ENCODE measurements at regions of chr13 and their contacts with region 1.

Region 1: GRCh38 chr13:21458813-21459701 is at the start of gene ZDHHC20:
- DNase-seq: peak; percentile 98
- H3K4me3 Mint-ChIP-seq: peak within 1 kb of the TSS; percentile 94
- H3K27ac Mint-ChIP-seq: peak within 1 kb of the TSS; percentile 93
- H3K4me1 Mint-ChIP-seq: peaks cover 27% of the 10 kb centered on the region
- H3K27me3 Mint-ChIP-seq: no peaks in the 10 kb centered on the region
- total RNA-seq, gene ZDHHC20: 64.7 and 65.4 TPM in 2 replicates

Region 2: DNA sequence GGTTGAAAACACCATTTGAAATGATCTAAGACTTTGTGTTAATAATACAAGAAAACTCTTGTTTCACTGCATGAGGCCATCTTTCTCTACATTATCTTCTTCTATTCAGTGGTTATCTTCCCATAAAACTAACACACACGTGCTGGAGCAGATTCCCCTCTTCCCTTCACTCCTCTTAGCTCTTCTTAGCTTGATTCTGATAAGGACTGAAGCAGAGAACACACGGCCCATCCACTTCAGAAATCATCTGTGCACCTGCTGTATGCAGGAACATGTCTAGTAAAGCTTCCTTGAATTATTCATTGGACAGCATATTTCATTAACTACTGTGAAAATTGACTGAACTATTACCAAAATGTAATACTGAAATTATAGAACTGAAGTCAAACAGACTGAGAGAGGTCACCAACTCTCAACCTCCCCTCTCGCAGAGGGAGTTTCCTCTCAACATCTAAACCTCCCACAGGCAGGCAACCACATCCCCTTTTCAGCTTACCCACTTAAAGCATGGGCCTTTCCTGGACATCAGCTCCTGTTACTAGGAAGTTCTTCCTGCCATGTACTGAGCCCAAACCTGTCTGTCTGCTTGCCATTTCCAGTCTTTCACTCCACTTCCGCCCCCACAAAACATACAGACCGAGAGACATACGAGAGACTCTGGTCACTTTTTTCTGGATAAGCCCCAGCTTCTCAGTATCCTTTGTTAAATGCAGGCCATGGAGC is 1047.3 kb before region 1 on chr13:
- intact Hi-C with region 1: loop called (anchors 10 kb)
- DNase-seq: peak; percentile 85
- H3K4me3 Mint-ChIP-seq: peak overlapping the region; percentile 68
- H3K27ac Mint-ChIP-seq: peak overlapping the region; percentile 81
- H3K4me1 Mint-ChIP-seq: peaks cover 26% of the 10 kb centered on the region
- H3K27me3 Mint-ChIP-seq: no peaks in the 10 kb centered on the region

Region 3: GRCh38 chr13:20902438-20903163 is 556.5 kb before region 1 on chr13 and contains the start of gene XPO4:
- intact Hi-C with region 1: loop called (anchors 1 kb)
- DNase-seq: peak; percentile 95
- H3K4me3 Mint-ChIP-seq: peak within 1 kb of the TSS; percentile 99
- H3K27ac Mint-ChIP-seq: peak within 1 kb of the TSS; percentile 97
- H3K4me1 Mint-ChIP-seq: peaks cover 26% of the 10 kb centered on the region
- H3K27me3 Mint-ChIP-seq: peaks cover 2% of the 10 kb centered on the region
- total RNA-seq, gene XPO4: 32.5 and 34.8 TPM in 2 replicates

Region 4: DNA sequence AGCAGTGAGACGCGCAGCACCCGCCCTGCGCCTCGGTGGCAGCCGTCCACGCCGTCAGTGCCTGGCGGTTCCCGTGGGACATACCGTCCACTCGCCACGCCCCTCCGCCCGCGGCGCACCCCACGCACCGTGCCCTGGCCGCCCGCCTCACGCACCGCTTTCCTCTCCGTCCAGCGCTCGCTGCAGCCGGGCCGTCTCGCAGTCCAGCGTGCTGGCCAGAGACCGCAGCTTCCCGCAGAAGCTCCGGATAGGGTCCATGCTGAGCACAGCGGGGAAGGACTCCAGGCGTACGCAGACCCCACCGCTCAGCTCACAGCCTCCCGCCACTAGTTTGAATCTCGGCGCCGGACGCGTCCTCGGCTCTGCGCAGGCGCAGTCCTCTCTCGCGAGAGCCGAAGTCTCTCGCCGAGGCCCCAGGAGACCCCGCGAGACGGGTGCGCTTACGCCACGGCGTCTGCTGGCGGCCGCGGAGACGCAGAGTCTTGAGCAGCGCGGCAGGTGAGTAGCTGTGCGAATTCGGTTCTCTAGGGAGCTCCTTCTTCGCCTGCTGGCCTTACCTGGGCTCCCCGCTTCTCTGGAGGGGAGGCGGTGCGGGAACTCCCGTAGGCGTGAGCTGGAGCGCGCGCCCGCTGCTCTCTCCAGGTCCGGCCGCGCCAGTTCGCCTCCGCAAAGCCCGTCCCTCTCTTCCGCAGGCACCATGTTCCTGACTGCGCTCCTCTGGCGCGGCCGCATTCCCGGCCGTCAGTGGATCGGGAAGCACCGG is 282.7 kb before region 1 on chr13 and contains the starts of genes MRPL57 and SKA3:
- intact Hi-C with region 1: loop called (anchors 1 kb)
- DNase-seq: peak; percentile 99
- H3K4me3 Mint-ChIP-seq: peak within 1 kb of the TSS; percentile 99
- H3K27ac Mint-ChIP-seq: peak within 1 kb of the TSS; percentile 98
- H3K4me1 Mint-ChIP-seq: peaks cover 23% of the 10 kb centered on the region
- H3K27me3 Mint-ChIP-seq: no peaks in the 10 kb centered on the region
- total RNA-seq, gene MRPL57: 32.7 and 33.0 TPM in 2 replicates
- total RNA-seq, gene SKA3: 35.6 and 39.6 TPM in 2 replicates

Region 5: GRCh38 chr13:21399741-21400140 is 59.3 kb before region 1 on chr13:
- intact Hi-C with region 1: loop called (anchors 5 kb)
- DNase-seq: no peak
- H3K4me3 Mint-ChIP-seq: peak overlapping the region; percentile 52
- H3K27ac Mint-ChIP-seq: peak overlapping the region; percentile 70
- H3K4me1 Mint-ChIP-seq: peaks cover 41% of the 10 kb centered on the region
- H3K27me3 Mint-ChIP-seq: no peaks in the 10 kb centered on the region

Region 6: GRCh38 chr13:21435710-21436151 is 23.3 kb before region 1 on chr13:
- intact Hi-C with region 1: loop called (anchors 1 kb)
- DNase-seq: peak; percentile 85
- H3K4me3 Mint-ChIP-seq: peak overlapping the region; percentile 52
- H3K27ac Mint-ChIP-seq: peak overlapping the region; percentile 83
- H3K4me1 Mint-ChIP-seq: peaks cover 31% of the 10 kb centered on the region
- H3K27me3 Mint-ChIP-seq: no peaks in the 10 kb centered on the region

Region 7: DNA sequence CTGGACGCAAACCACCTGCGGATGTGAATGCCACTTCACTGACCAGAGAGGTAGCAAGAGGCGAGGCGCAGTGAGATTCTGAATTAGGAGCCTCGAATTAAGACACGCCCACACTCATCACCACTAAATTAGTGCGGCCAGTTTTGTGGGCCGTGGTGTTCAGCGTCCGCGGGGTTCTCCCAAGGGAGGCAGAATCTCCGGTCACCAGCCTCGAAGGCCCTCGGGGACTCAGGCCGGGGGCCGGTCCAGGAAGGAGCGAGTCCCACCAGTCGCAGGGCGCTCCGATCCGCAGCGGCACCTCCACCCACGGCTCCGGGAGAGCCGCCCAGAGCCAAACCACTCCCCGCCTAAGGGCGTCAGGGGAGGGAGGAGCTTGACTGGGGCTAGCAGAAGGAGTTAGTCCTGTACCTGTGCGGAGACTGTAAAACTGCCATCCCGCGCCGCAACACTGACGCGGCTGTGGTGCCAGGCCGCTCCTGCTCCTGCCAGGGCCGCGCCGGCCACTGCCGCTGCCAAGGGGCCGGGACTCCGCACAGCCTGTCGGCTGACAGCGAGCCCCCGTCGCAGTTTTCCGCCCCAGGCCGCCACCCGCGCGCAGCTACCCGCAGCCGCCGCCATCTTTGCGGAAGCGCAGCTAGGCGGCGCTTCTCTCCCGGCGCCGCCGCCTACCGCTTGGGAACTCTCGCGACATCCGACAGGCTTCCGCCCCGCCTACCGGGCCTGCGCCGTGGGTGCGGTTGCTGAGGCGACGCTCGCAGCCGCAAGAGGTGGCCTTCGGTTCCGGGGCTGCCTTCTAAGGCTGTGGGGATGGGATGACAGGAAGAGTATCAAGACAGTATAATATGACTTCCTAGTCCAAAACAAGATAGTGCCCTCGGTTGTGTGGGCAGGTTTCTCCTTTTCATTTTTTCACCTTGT is 144.7 kb after region 1 on chr13 and contains the start of gene MICU2:
- intact Hi-C with region 1: loop called (anchors 1 kb)
- DNase-seq: peak; percentile 99
- H3K4me3 Mint-ChIP-seq: peak within 1 kb of the TSS; percentile 89
- H3K27ac Mint-ChIP-seq: peak within 1 kb of the TSS; percentile 89
- H3K4me1 Mint-ChIP-seq: peaks cover 25% of the 10 kb centered on the region
- H3K27me3 Mint-ChIP-seq: peaks cover 22% of the 10 kb centered on the region
- total RNA-seq, gene MICU2: 34.2 and 35.0 TPM in 2 replicates

Measured in activated CD4-positive, alpha-beta T cell treated with anti-CD3 and anti-CD28 coated beads, Interleukin-2, amount 10 ng/mL, durations not matched to agents 24 days and 14 days (primary cell).